Calu3 (cell line): ENCODE measurements at regions of chr4 and their contacts with region 1.

Region 1: DNA sequence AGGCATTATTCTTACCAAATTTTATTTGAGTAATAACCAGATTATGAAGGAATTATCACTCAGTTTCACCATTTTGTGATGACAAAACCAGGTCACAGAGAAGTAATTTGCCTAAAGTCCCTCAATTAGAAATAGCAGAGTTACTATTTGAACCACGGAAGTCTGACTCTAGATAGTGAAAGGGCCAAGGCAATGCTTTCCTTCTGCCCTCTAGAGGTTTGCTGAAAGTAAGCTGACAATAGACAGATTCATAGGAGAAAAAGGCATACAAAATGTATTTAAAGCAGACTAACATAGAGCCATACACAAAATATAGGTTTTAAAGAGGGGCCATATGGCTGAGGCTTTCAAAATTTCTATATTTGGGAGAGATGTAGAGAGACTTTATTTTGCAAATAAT is 43.1 kb downstream of the CXXC4 start:
- DNase-seq: no peak
- H3K4me3 Mint-ChIP-seq: no peak overlapping the region
- H3K27ac Mint-ChIP-seq: no peak overlapping the region
- H3K4me1 Mint-ChIP-seq: no peaks in the 10 kb centered on the region
- H3K27me3 Mint-ChIP-seq: no peaks in the 10 kb centered on the region
- CTCF ChIP-seq: no peak

Region 2: GRCh38 chr4:104064646-104065577 is 386.7 kb before region 1 on chr4:
- CTCF ChIA-PET with region 1: no interaction called
- intact Hi-C with region 1: loop called (anchors 1 kb)
- DNase-seq: peak; percentile 53
- H3K4me3 Mint-ChIP-seq: no peak overlapping the region
- H3K27ac Mint-ChIP-seq: no peak overlapping the region
- H3K4me1 Mint-ChIP-seq: no peaks in the 10 kb centered on the region
- H3K27me3 Mint-ChIP-seq: no peaks in the 10 kb centered on the region
- CTCF ChIP-seq: peak; percentile 48